Heart right ventricle (tissue), 16 donors: ENCODE measurements at regions of chr1 and their contacts with region 1.

Region 1: GRCh38 chr1:41404308-41404761 is 43.1 kb downstream of the FOXO6 start:
- DNase-seq: no peak
- ATAC-seq: peak in 3 of 8 donors; percentile 17 to 46 (median 42)
- H3K4me3 ChIP-seq: no peak overlapping the region
- H3K27ac ChIP-seq: no peak overlapping the region
- H3K4me1 ChIP-seq: peaks cover 0 to 11% (median 6%) of the 10 kb centered on the region in 9 donors
- H3K27me3 ChIP-seq: peaks cover 0 to 21% (median 16%) of the 10 kb centered on the region in 7 donors
- CTCF ChIP-seq: no peak

Region 2: DNA sequence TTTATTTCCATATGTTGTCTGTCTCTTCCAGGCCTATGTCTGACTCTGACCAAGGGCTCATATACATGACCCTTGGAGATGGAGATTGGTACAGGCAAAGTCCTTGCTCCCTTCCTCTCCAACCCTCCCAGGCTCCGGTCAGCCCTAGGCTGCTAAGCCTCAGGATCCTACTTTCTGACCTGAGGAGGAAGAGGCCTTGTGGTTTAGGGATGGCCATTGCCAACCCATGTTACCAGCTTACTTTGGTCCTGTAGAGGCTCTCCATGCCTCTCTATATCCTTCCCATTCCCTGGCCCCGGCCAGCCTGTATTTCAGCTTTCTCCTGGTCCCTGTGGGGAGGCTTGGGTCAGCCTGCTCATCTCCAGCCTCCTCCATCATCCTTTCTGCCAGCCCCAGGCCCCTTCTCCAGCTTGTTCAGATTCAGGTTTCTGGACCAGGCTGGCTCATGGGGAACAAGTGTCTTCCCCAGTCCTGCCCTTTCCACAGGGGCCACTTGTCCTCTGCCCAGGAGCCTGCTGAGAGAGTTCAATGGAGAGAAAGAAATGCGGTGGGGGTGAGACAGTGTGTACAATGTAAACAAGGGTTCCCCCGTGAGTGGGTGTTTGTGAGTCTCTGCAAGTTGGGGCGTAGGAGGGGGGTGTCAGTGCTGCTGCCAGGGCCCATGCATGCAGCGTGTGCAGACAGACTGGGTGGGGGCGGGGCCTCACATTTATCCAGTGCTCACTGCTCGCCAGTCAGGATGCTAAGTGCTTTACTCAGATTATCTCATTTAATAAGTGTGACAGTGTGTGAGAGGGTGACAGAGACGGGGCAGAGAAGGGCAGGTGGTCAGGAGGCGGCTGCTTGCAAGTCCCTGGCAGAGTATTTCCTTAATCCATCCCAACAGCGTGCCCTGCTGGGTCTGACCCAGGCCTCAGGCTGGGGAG is 74.4 kb before region 1 on chr1:
- intact Hi-C with region 1: loop called in 1 of 10 experiments (anchors 5 kb)
- DNase-seq: no peak
- ATAC-seq: peak in 1 of 8 donors; percentile 18
- H3K4me3 ChIP-seq: no peak overlapping the region
- H3K27ac ChIP-seq: no peak overlapping the region
- H3K4me1 ChIP-seq: no peaks in the 10 kb centered on the region
- H3K27me3 ChIP-seq: peaks cover 0 to 15% (median 0%) of the 10 kb centered on the region in 7 donors
- CTCF ChIP-seq: no peak

Region 3: GRCh38 chr1:41728403-41729202 is 324.3 kb after region 1 on chr1:
- intact Hi-C with region 1: no loop called
- DNase-seq: no peak
- ATAC-seq: peak in 3 of 8 donors; percentile 10 to 25 (median 23)
- H3K4me3 ChIP-seq: no peak overlapping the region
- H3K27ac ChIP-seq: peak overlapping the region in 1 of 10 donors; percentile 81
- H3K4me1 ChIP-seq: peaks cover 8 to 88% (median 59%) of the 10 kb centered on the region in 9 donors
- H3K27me3 ChIP-seq: no peaks in the 10 kb centered on the region
- CTCF ChIP-seq: no peak